Activated CD8-positive, alpha-beta T cell treated with anti-CD3 and anti-CD28 coated beads, Interleukin-2, amount 10 ng/mL, durations not matched to agents 7 days and 5 days (primary cell): ENCODE measurements at regions of chr2 and their contacts with region 1.

Region 1: GRCh38 chr2:74147727-74148456 is at the start of gene BOLA3:
- DNase-seq: peak; percentile 88
- ATAC-seq: peak; percentile 97
- H3K4me3 Mint-ChIP-seq: no peak within 1 kb of the TSS
- H3K27ac Mint-ChIP-seq: no peak within 1 kb of the TSS
- H3K4me1 Mint-ChIP-seq: peaks cover 9% of the 10 kb centered on the region
- H3K27me3 Mint-ChIP-seq: no peaks in the 10 kb centered on the region
- total RNA-seq, gene BOLA3: 79.7 to 85.4 TPM

Region 2: GRCh38 chr2:73611867-73612266 is 536.0 kb before region 1 on chr2:
- CTCF ChIA-PET with region 1: no interaction called
- POLR2A ChIA-PET with region 1: no interaction called
- DNase-seq: no peak
- ATAC-seq: no peak
- H3K4me3 Mint-ChIP-seq: no peak overlapping the region
- H3K27ac Mint-ChIP-seq: no peak overlapping the region
- H3K4me1 Mint-ChIP-seq: peaks cover 9% of the 10 kb centered on the region
- H3K27me3 Mint-ChIP-seq: no peaks in the 10 kb centered on the region

Region 3: DNA sequence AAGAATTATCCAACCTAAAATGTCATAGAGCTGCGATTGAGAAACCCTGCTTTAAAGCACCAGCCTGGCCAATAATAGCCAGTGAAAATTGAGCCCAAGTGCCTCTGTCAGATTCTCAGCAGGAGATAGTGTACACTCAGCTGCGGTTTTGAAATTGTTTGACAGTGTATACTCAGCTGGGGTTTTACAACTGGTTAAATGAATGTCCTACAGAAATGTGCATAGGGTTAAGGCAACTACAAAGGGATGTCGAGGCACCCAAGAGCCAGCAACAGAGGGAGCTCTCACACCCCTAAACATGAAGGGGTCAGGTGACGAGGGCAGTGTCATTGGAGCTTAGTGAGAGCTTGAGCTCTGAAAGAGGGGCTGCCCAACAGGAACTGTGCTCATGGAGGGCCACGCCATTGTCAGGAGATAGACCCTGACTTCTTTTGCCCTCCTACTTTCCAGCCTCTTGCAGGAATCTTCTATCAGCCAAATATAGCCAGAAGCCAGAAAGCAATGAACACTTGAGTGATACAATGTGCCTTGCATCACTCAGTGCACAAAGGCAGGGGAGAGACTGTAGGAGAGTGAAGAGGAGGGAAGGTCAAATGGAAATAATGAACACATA is 239.9 kb before region 1 on chr2:
- CTCF ChIA-PET with region 1: interaction called, 14 read pairs
- POLR2A ChIA-PET with region 1: no interaction called
- DNase-seq: peak; percentile 73
- ATAC-seq: peak; percentile 94
- H3K4me3 Mint-ChIP-seq: no peak overlapping the region
- H3K27ac Mint-ChIP-seq: peak overlapping the region; percentile 45
- H3K4me1 Mint-ChIP-seq: peaks cover 8% of the 10 kb centered on the region
- H3K27me3 Mint-ChIP-seq: no peaks in the 10 kb centered on the region

Region 4: DNA sequence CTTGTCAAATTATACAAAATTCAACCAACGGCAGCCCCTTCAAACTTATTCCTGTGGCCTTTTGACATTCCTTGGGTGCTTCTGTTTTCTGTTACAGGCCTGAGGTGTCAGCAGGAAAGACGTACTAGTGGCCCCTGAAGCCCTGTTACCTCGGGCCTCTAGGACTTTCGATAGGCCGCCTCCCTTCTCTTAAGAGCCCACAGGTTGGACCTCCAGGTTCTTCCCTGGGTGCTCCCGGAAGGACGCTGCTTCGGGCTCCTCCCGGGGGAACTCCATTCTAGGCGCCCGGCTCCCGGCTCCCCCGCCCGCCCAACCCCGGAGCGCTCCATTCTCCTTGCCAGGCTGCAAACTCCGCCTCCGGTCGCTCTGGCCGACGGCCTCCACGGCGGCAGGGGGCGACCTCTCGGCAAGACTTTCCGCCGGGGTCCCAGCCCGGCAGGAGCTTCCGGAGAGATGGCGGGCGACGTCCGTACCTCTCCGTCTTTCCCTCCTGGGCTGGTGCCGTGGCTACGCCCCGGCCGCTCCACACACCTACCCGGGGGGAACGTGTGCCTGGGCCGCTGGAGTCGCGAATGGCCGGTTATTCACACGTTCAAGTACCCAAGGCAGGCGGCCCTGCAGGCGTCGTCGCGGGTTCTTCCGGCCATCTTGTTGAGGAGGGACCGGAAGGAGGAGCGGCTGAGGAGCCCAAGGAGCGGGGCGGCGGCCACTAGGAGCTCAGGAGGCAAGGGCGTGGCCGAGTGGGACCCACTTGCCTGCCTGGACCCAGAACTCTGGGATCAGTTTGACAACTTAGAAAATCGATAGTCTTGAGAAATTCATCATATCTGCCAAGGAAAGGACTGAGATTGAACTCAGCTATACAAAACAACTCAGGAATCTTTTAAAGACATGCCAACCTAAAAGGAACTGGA is 27.7 kb before region 1 on chr2:
- CTCF ChIA-PET with region 1: interaction called, 15 read pairs
- POLR2A ChIA-PET with region 1: interaction called, 7 read pairs
- DNase-seq: peak; percentile 88
- ATAC-seq: peak; percentile 97
- H3K4me3 Mint-ChIP-seq: peak overlapping the region; percentile 82
- H3K27ac Mint-ChIP-seq: peak overlapping the region; percentile 96
- H3K4me1 Mint-ChIP-seq: peaks cover 11% of the 10 kb centered on the region
- H3K27me3 Mint-ChIP-seq: peaks cover 2% of the 10 kb centered on the region

Region 5: DNA sequence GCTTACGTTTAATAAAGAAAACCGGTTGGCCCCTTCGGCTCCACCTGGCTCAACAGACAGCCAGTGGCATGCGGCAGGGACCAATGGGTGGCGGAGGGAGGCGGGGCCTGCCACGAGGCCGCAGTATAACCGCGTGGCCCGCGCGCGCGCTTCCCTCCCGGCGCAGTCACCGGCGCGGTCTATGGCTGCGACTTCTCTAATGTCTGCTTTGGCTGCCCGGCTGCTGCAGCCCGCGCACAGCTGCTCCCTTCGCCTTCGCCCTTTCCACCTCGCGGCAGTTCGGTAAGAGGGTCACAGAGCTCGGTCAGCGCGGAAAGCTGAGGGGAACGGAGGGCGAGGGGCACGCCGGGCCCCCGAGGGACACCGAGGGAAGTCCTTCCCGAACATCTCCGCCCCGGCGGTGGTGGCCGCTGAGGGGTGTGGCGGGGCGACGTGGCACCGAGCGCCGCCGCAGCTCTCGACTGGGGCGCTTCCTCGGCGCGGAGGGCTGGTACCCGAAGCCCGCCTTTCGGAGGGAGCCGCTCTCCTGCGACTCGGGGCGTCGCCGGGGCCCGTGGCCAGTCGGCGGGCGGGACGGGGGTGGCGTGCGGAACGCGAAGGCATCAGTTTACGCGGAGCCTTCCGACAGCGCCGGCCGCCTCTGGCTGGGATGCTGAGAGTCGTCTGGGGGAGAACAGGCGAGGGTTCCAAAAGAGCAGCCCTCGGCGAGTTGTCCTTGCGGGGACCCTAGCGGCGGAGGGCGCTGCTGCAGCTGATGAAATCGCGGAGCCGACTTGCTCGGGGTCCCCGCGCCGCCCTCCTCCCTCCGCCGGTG is 50.8 kb after region 1 on chr2 and contains the start of gene MTHFD2:
- CTCF ChIA-PET with region 1: interaction called, 8 read pairs
- POLR2A ChIA-PET with region 1: interaction called, 22 read pairs
- DNase-seq: peak; percentile 95
- ATAC-seq: peak; percentile 92
- H3K4me3 Mint-ChIP-seq: peak within 1 kb of the TSS; percentile 97
- H3K27ac Mint-ChIP-seq: peak within 1 kb of the TSS; percentile 100
- H3K4me1 Mint-ChIP-seq: peaks cover 45% of the 10 kb centered on the region
- H3K27me3 Mint-ChIP-seq: no peaks in the 10 kb centered on the region
- total RNA-seq, gene MTHFD2: 162 to 164 TPM